WTC11 (cell line): ENCODE measurements at regions of chr7 and their contacts with region 1.

Region 1: GRCh38 chr7:191981-192649 is at the start of gene FAM20C:
- DNase-seq: peak; percentile 54
- ATAC-seq: peak; percentile 15
- H3K4me3 Mint-ChIP-seq: peak within 1 kb of the TSS; percentile 87
- H3K27ac Mint-ChIP-seq: peak within 1 kb of the TSS; percentile 82
- H3K4me1 Mint-ChIP-seq: peaks cover 64% of the 10 kb centered on the region
- H3K27me3 Mint-ChIP-seq: peaks cover 5% of the 10 kb centered on the region; the same call in 1 of the 2 replicates
- CTCF ChIP-seq: no peak
- total RNA-seq, gene FAM20C: 48.0 to 64.9 TPM (median 49.1 TPM) in 3 replicates

Region 2: DNA sequence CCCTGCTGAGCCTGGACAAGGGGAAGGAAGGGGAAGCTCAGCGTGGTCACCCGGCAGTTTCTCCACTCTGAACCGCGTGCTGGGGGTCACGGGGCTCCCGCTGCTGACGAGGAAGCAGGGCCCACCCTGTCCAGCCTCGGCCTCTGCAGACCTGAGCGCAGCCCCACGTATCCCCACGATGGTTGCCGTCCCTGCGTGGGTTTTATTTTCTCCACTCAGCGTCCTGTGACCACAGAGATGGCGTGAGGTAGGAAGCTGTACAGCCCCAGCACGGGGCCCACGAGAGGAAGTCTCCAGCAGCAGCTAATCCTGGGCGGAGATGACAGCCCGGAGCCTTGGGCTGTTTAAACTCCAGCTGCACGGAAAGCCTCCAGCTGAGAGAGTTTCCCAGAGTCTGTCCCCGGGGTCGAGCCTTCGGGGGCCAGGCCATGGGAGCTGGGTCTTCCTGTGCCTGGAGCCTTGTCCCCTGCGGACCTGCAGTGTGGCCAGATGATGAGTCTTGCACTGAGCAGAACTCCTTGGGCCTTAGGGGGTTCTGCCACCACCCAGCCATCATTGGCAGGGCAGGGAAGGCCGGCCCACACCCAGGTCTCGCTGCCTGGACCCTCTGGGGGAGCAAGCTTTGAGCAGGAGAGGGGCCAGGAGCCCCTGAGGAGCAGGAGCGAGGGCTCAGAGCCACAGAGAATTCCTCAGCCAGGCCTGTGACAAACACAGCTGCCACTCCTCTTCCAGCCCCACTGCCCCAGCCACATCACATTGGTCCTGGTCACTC is 72.5 kb before region 1 on chr7:
- CTCF ChIA-PET with region 1: interaction called, 10 read pairs
- POLR2A ChIA-PET with region 1: interaction called, 3 read pairs
- DNase-seq: no peak
- ATAC-seq: no peak; the same call in 1 of the 2 replicates
- H3K4me3 Mint-ChIP-seq: no peak overlapping the region
- H3K27ac Mint-ChIP-seq: no peak overlapping the region
- H3K4me1 Mint-ChIP-seq: peaks cover 56% of the 10 kb centered on the region
- H3K27me3 Mint-ChIP-seq: peaks cover 15% of the 10 kb centered on the region
- CTCF ChIP-seq: no peak

Region 3: DNA sequence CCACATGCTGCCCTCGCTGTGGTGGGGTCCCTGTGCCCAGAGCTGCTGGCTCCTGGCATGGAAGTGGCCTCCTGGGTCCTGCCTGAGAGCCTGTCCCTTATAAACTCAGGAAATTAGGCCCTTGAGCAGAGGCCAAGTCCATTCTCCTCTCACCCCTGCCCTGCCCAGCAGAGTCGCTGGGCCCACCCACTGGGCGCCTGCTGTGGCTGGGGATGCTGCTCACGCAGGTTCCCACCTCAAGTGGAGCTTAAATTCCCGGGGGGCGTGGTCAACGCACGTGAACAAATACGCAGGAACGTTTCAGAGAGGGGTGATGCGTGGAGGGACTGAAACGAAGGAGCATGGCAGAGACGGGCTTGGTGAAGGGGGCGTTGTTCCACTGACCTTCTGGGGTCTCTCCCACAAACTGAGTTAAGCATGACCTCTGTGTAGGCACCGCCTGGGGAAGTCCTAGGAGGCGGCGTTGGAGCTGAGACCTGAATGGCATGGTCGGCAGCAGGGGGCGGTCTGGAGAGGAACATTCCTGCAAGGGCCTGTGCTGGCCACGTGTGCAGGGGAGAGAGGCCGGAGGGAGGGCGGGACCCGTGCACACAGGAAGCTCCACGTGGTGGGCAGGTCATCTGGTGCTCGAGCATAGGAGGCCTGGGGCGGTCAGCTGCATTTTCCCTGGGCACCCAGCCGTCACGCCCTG is 28.2 kb after region 1 on chr7:
- CTCF ChIA-PET with region 1: interaction called, 10 read pairs
- POLR2A ChIA-PET with region 1: no interaction called
- DNase-seq: peak; percentile 76
- ATAC-seq: peak; percentile 86
- H3K4me3 Mint-ChIP-seq: no peak overlapping the region
- H3K27ac Mint-ChIP-seq: peak overlapping the region; percentile 63; the same call in 1 of the 2 replicates
- H3K4me1 Mint-ChIP-seq: peaks cover 14% of the 10 kb centered on the region
- H3K27me3 Mint-ChIP-seq: no peaks in the 10 kb centered on the region
- CTCF ChIP-seq: no peak